AG04449 (cell line): ENCODE measurements at regions of chr21 and their contacts with region 1.

Region 1: GRCh38 chr21:45270306-45270821 is 17.3 kb downstream of the POFUT2 start:
- DNase-seq: no peak
- H3K4me3 ChIP-seq: no peak overlapping the region
- CTCF ChIP-seq: peak; percentile 21

Region 2: DNA sequence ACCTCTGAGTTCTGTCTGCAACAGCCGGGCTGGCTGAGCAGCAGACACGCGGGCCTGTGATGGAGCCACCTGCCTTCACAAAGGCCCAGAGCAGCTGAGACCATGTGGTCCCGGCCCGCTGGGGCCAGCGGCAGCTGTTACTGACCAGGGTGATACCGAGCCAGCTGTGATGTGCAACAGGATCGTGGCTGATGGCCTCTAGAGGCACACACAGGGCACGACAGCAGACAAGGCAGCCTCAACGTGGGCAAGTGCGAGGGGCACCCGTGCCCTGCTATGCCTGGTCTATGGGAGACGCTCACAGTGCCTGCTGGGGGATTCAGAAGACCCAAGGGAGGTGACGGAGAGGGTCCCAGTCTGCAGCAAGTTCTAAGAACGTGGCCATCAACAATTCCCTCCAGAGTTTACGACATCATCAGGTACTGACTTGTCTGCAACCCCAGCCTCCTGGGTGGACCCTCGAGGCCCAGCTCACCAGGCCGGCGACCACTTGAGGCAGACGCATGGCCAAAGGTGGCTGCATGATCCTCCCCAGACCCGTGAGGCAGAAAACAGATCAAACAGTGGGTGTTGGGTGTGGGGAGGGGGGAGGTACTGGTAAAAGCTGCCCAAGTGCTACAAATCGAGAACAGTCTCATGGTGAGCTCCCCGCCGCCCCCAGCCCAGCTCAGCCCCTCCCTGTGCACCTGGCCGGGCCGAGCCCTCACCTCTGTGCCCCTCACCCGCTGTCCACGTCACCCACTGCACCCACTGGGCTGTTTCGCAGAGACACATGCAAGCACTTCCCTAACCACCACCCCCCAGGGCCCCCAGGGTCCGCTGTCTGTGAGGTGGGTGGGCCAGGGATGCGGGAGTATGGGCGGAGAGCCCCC is 11.3 kb after region 1 on chr21:
- CTCF ChIA-PET with region 1: interaction called, 10 read pairs
- POLR2A ChIA-PET with region 1: no interaction called
- DNase-seq: no peak
- H3K4me3 ChIP-seq: no peak overlapping the region
- CTCF ChIP-seq: no peak